ENCODE measurements at regions of chr11 and their contacts with region 1.

Region 1: GRCh38 chr11:91312541-91312940 is 912.1 kb upstream of the FAT3 start:
- DNase-seq: no peak
- ATAC-seq: no peak
- H3K4me3 ChIP-seq: no peak overlapping the region
- H3K27ac ChIP-seq: no peak overlapping the region
- H3K4me1 ChIP-seq: no peaks in the 10 kb centered on the region
- H3K27me3 ChIP-seq: no peaks in the 10 kb centered on the region
- CTCF ChIP-seq: no peak
- POLR2A ChIP-seq: no peak
- RAD21 ChIP-seq: no peak

Region 2: GRCh38 chr11:91248199-91248807 is 64.2 kb before region 1 on chr11:
- CTCF ChIA-PET with region 1: no interaction called
- POLR2A ChIA-PET with region 1: no interaction called
- dilution Hi-C with region 1: no loop called
- in situ Hi-C with region 1: no loop called
- intact Hi-C with region 1: no loop called
- DNase-seq: peak; percentile 53
- ATAC-seq: no peak; the same call in 1 of the 2 replicates
- H3K4me3 ChIP-seq: no peak overlapping the region
- H3K27ac ChIP-seq: no peak overlapping the region
- H3K4me1 ChIP-seq: no peaks in the 10 kb centered on the region
- H3K27me3 ChIP-seq: no peaks in the 10 kb centered on the region
- CTCF ChIP-seq: peak; percentile 65
- POLR2A ChIP-seq: no peak
- RAD21 ChIP-seq: peak; percentile 62

Region 3: GRCh38 chr11:91261513-91261912 is 51.0 kb before region 1 on chr11:
- CTCF ChIA-PET with region 1: no interaction called
- POLR2A ChIA-PET with region 1: no interaction called
- dilution Hi-C with region 1: no loop called
- in situ Hi-C with region 1: no loop called
- intact Hi-C with region 1: no loop called
- DNase-seq: no peak
- ATAC-seq: no peak
- H3K4me3 ChIP-seq: no peak overlapping the region
- H3K27ac ChIP-seq: no peak overlapping the region
- H3K4me1 ChIP-seq: no peaks in the 10 kb centered on the region
- H3K27me3 ChIP-seq: no peaks in the 10 kb centered on the region
- CTCF ChIP-seq: no peak
- POLR2A ChIP-seq: no peak
- RAD21 ChIP-seq: no peak

Region 4: DNA sequence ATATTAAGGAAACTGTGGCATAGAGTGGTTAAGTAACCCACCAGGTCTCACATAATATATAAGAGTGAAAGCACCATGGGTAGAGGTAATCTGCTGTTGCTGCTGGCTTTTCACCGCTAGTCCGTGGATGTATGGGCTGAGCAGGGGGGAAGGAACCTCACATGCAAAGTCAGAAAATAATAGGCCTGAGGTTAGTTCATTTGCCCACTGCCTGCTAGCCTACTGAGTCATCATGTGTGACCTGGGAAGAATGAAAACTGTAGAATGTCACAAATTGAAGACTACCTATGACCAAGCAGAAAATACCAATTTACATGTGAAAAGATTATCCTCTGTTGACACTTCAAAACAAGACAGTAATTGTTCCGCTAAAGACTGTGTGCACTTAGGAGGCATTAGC is 352.0 kb after region 1 on chr11:
- CTCF ChIA-PET with region 1: no interaction called
- POLR2A ChIA-PET with region 1: interaction called, 10 read pairs
- dilution Hi-C with region 1: no loop called
- in situ Hi-C with region 1: no loop called
- intact Hi-C with region 1: no loop called
- DNase-seq: no peak
- ATAC-seq: no peak
- H3K4me3 ChIP-seq: no peak overlapping the region
- H3K27ac ChIP-seq: no peak overlapping the region
- H3K4me1 ChIP-seq: no peaks in the 10 kb centered on the region
- H3K27me3 ChIP-seq: no peaks in the 10 kb centered on the region
- CTCF ChIP-seq: no peak
- POLR2A ChIP-seq: no peak
- RAD21 ChIP-seq: no peak

Measured in IMR-90 (cell line).